Activated B cell treated with CpG ODN at 0.5 μM for 24 hours (primary cell): ENCODE measurements at regions of chr6 and their contacts with region 1.

Region 1: GRCh38 chr6:25017932-25018567 is 82.3 kb upstream of the RIPOR2 start:
- DNase-seq: no peak
- ATAC-seq: peak; percentile 68
- H3K4me3 Mint-ChIP-seq: peak overlapping the region; percentile 32
- H3K27ac Mint-ChIP-seq: peak overlapping the region; percentile 70
- H3K4me1 Mint-ChIP-seq: peaks cover 56% of the 10 kb centered on the region
- H3K27me3 Mint-ChIP-seq: no peaks in the 10 kb centered on the region
- CTCF ChIP-seq: no peak

Region 2: DNA sequence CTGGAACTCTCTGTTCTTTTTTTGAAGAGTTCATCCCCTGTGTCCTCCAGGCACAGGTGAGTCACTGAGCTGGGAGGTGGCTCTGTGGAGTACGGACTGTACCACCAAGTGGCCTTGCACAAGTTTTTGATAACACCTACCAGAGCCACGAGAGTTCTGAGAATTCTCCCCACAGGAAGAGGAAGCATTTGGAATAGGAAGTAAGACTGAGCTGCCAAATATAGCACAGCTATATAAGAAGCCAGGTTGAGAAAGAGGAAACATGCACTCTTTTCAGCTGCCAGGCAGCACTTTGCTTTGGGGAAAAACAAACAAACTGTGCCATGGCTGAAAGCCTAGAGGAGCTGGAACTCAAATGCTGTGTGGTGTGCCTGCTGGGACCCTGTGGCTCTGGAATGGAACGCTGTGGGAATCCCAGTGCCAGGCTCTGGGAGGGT is 11.5 kb before region 1 on chr6:
- CTCF ChIA-PET with region 1: interaction called, 4 read pairs
- POLR2A ChIA-PET with region 1: no interaction called
- intact Hi-C with region 1: loop called (anchors 1 kb)
- DNase-seq: no peak
- ATAC-seq: peak; percentile 69
- H3K4me3 Mint-ChIP-seq: peak overlapping the region; percentile 46
- H3K27ac Mint-ChIP-seq: peak overlapping the region; percentile 83
- H3K4me1 Mint-ChIP-seq: peaks cover 78% of the 10 kb centered on the region
- H3K27me3 Mint-ChIP-seq: no peaks in the 10 kb centered on the region
- CTCF ChIP-seq: no peak